Dorsolateral prefrontal cortex (tissue), 120 donors: ENCODE measurements at regions of chr12 and their contacts with region 1.

Region 1: DNA sequence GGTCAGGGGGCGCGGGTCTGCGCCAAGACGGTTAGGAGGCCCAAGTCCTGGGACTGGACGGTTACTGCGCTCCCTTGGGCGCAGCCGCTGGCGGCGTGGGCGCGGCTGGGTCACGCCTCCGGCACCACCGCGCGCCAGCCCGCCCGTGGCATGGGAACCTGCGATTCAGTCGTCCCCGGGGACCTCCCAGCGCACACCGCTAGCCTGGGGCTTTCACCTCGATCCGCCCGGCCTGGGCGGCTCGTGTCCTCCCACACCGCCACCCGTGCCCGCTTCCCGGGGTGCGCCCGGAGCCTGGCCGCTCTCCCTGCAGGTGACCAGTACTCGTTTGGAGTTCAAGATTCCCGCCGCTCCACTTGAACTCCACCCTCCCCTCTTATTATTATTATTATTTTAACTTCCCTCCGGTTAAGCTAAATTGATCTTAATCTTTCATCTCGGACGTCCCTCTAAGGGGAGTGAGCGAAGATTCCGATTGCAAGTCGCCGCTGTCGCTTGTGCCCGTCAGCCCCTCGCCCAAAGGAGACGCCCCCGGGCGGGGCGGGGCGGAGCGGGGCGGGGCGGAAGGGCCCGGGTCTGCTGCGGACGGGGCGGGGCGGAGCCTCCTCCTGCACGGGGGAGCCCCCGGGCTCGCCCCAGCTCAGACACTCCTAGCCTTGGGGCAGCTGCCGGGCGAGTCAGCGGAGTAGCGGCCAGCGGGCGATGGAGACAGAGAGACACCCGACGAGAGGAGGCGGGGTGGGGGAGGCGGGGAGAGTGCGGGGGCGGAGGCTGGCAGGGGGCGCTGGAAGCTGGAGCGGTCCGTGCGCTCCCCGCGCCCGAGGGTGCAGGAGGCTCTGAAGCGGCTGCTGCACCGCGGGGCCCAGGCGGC is at the start of gene KCNMB4:
- DNase-seq: peak; percentile 55 to 91 (median 78)
- H3K4me3 ChIP-seq: peak within 1 kb of the TSS; percentile 53 to 94 (median 85)
- H3K27ac ChIP-seq: peak within 1 kb of the TSS; percentile 41 to 95 (median 86)
- H3K27me3 ChIP-seq: no peaks in the 10 kb centered on the region
- CTCF ChIP-seq: peak in 7 of 56 donors; percentile 4 to 27 (median 20)
- total RNA-seq, gene KCNMB4: 26.9 to 134 (median 53.1) TPM

Region 2: DNA sequence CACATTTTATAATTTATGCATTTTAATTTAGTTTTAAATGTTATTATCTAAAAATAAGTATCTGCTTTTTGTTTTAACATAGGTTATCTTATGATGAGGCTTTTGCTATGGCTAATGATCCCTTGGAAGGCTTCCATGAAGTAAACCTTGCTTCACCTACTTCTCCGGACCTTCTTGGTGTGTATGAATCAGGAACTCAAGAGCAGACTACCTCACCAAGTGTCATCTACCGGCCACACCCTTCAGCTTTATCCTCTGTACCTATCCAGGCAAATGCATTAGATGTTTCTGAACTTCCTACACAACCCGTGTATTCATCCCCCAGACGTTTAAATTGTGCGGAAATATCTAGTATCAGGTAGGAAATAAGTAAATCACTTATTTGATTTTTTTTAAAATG is 610.6 kb before region 1 on chr12:
- intact Hi-C with region 1: no loop called
- DNase-seq: no peak
- H3K4me3 ChIP-seq: no peak overlapping the region
- H3K27ac ChIP-seq: no peak overlapping the region
- H3K27me3 ChIP-seq: no peaks in the 10 kb centered on the region
- CTCF ChIP-seq: no peak

Region 3: GRCh38 chr12:69888901-69889300 is 477.0 kb before region 1 on chr12:
- intact Hi-C with region 1: no loop called
- DNase-seq: no peak
- H3K4me3 ChIP-seq: no peak overlapping the region
- H3K27ac ChIP-seq: no peak overlapping the region
- H3K27me3 ChIP-seq: no peaks in the 10 kb centered on the region
- CTCF ChIP-seq: no peak

Region 4: DNA sequence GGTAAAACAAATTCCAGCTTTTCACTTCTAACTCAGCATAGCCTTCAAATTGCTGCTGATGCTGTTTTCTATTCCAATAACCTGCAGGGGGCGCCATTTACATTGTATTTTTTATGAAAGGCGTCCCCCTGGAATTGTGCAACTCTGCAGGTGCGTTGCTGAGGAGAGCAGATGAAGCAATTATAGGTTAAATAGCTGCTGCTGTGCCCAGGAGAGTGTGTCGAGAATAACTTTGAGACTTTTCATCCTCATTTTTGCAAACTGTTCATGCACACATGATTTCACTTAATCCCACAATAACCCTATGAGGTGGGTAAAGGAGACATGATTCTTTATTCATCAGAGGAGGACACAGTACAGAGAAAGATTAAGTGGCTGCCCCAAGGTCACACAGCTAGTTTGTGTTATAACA is 465.2 kb before region 1 on chr12:
- intact Hi-C with region 1: loop called (anchors 5 kb)
- DNase-seq: peak in 7 of 10 donors; percentile 57 to 88 (median 70)
- H3K4me3 ChIP-seq: peak overlapping the region in 1 of 59 donors; percentile 6
- H3K27ac ChIP-seq: peak overlapping the region in 8 of 59 donors; percentile 2 to 82 (median 55)
- H3K27me3 ChIP-seq: no peaks in the 10 kb centered on the region
- CTCF ChIP-seq: peak; percentile 79 to 95 (median 90)

Region 5: GRCh38 chr12:70242695-70243509 is 123.0 kb before region 1 on chr12 and contains the start of gene CNOT2:
- intact Hi-C with region 1: loop called (anchors 5 kb)
- DNase-seq: peak; percentile 79 to 90 (median 85)
- H3K4me3 ChIP-seq: peak within 1 kb of the TSS; percentile 70 to 99 (median 93)
- H3K27ac ChIP-seq: peak within 1 kb of the TSS; percentile 82 to 99 (median 95)
- H3K27me3 ChIP-seq: no peaks in the 10 kb centered on the region
- CTCF ChIP-seq: peak in 19 of 56 donors; percentile 2 to 29 (median 12)
- total RNA-seq, gene CNOT2: 63.7 to 156 (median 84.5) TPM

Region 6: DNA sequence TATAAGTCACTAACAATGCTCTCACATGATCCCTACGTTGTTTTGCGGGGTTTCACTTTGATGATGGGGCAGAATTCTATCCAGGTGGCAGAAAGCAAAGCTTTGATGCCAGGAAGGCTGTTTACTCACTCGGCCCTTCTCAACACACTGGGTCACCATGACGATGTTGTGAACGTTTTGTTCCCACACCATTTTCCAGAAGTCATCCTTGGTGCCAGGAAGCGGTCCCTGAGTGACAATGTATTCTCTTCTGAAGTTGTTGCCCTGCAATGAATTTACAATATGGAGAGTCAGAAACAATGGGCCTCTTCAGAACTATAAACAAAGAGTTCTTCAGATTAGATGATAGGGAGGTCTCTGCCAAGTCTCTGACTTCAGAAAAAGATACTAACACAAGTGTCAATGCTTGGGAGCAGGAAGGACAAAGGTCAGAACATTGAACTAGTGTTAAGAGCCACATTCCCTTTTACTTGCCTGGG is 170.1 kb after region 1 on chr12:
- intact Hi-C with region 1: loop called (anchors 5 kb)
- DNase-seq: peak; percentile 11 to 87 (median 72)
- H3K4me3 ChIP-seq: peak overlapping the region in 5 of 59 donors; percentile 5 to 32 (median 14)
- H3K27ac ChIP-seq: peak overlapping the region; percentile 52 to 99 (median 95)
- H3K27me3 ChIP-seq: no peaks in the 10 kb centered on the region
- CTCF ChIP-seq: peak in 1 of 56 donors; percentile 11

Region 7: GRCh38 chr12:70576346-70577282 is 210.7 kb after region 1 on chr12:
- intact Hi-C with region 1: loop called (anchors 5 kb)
- DNase-seq: peak in 1 of 10 donors; percentile 39
- H3K4me3 ChIP-seq: peak overlapping the region in 26 of 59 donors; percentile 0 to 43 (median 26)
- H3K27ac ChIP-seq: peak overlapping the region in 53 of 59 donors; percentile 7 to 88 (median 63)
- H3K27me3 ChIP-seq: no peaks in the 10 kb centered on the region
- CTCF ChIP-seq: peak; percentile 77 to 99 (median 90)